ENCODE measurements at regions of chr9 and their contacts with region 1.

Region 1: DNA sequence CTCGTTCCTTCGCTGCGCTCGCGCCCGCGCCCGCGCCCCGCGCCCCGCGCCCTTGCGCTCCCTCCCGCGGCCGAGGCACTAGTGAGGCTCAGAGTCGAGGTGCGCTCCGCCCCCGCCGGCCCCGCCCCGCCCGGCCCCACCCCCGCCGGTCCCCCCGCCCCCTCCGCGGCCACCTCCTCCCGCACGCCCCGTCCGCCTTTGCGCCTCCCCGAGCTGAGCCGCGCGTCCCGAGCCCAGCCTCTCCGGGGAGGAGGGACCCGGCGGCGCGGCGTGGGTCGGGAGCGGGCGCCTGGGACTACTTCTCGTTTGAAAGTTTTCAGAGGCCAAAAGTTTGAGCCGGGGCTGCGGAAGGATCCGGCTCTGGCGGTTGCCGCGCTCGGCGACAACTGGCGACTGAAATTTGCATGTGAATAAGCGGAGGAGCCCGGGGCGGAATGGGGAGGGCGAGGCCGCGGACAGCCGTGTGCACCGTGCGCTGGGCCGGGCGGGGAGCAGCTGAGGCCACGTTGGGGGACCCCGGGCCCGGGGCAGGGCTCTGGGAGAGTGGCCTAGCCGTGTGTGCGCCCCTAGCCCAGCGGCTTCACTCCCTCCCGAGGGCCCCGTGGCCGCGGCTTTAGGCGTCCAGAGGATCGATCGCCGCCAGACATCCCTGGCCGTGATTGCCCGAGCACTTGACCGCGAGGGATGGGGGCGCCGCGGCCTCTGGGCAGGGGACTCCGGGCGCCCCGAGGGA is at the start of gene NOTCH1:
- DNase-seq: peak; percentile 65 to 93 (median 86)

Region 2: DNA sequence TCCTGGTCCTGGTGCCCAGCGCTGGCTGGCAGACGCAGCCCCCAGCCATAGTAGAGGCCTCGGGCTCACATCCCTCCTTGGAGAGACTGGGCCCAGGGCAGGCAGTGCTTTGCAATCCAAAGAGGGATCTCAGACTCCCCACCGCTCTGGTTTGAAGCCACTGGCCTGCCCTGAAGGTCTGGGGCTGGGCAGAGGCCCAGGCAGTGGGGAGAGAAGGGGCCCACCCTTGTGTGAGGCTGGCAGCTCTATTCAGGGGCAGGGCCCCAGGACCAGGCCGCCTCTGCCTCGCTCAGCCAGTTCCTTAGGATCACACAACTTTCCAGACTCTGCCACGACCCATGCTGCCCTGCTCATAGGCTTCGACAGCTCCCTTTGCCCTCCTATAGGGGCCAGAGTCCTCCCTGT is 52.6 kb before region 1 on chr9:
- intact Hi-C with region 1: loop called (anchors 10 kb)
- DNase-seq: peak in 8 of 42 donors; percentile 38 to 71 (median 54)

Region 3: DNA sequence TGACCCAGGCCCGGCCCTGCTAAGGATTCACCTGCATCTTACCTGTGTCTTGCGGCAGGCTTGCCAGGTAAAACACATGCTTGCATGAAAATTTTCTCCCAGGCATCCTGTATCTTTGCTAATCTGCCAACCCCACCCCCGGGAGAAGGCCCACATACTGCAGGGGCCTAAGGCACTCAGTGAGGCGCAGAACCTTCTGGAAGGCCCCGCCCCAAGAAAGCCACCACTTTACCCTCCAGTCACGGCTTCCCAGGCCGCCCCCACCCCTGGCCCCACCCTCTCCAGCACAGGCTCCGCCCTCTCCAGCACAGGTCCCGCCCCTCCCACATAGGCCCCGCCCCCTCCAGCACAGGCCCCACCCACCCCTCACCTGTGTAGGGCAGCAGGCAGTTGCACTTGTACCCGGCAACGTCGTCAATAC is 33.5 kb before region 1 on chr9:
- intact Hi-C with region 1: loop called (anchors 2 kb)
- DNase-seq: peak in 6 of 42 donors; percentile 40 to 73 (median 44)

Region 4: DNA sequence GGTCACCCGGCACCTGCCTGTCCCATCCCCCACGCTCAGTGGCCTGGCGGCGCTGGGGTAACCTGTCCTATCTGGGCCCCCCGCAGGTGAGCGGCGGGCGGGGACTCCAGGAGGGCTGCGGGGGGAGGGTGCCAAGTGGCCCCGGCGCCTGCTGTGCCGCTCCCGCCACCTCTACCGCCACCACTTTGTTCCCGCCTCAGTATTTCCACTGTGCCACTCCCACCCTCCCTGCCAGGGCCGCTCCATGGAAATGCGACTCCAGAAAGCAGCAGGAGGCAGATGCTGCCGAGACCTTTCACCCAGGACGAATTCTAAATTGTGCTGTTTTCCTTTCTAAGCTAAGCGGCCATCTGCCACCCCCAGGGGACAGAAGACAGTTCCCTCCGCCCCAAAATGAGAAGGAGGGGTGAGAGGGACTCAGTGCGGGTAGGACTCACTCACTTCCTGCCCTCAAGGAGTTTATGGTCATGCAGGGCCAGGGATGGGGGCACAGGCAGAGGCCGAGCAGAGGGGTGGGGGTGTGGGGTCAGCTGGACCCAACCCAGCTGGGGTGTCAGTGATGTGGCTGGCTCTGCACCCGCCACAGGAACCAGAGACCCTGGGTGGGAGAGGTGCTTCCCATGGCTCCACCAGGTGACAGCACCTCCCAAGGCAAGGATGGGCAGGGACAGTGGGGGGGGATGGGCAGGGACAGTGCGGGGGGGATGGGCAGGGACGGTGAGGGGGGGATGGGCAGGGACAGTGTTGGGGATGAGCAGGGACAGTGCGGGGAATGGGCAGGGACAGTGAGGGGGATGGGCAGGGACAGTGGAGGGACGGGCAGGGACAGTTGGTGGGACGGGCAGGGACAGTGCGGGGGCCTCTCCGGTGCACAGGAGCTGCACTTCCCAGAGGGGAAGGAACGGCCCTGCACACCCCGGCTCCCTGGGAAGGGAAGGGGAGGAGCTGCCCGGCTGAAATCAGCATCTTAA is 18.1 kb before region 1 on chr9:
- intact Hi-C with region 1: loop called (anchors 2 kb)
- DNase-seq: peak in 11 of 42 donors; percentile 42 to 75 (median 51)

Measured in head of caudate nucleus (tissue), 42 donors.